Activated B cell treated with CpG ODN at 0.5 μM for 24 hours (primary cell): ENCODE measurements at regions of chr3 and their contacts with region 1.

Region 1: GRCh38 chr3:119524931-119525662 is 26.8 kb downstream of the TIMMDC1 start:
- DNase-seq: no peak
- ATAC-seq: no peak
- H3K4me3 Mint-ChIP-seq: no peak overlapping the region
- H3K27ac Mint-ChIP-seq: peak overlapping the region; percentile 15
- H3K4me1 Mint-ChIP-seq: peaks cover 10% of the 10 kb centered on the region
- H3K27me3 Mint-ChIP-seq: no peaks in the 10 kb centered on the region
- CTCF ChIP-seq: no peak

Region 2: GRCh38 chr3:119508172-119508845 is 16.8 kb before region 1 on chr3:
- CTCF ChIA-PET with region 1: no interaction called
- POLR2A ChIA-PET with region 1: no interaction called
- intact Hi-C with region 1: loop called (anchors 2 kb)
- DNase-seq: no peak
- ATAC-seq: no peak
- H3K4me3 Mint-ChIP-seq: no peak overlapping the region
- H3K27ac Mint-ChIP-seq: peak overlapping the region; percentile 15
- H3K4me1 Mint-ChIP-seq: peaks cover 12% of the 10 kb centered on the region
- H3K27me3 Mint-ChIP-seq: no peaks in the 10 kb centered on the region
- CTCF ChIP-seq: no peak

Region 3: DNA sequence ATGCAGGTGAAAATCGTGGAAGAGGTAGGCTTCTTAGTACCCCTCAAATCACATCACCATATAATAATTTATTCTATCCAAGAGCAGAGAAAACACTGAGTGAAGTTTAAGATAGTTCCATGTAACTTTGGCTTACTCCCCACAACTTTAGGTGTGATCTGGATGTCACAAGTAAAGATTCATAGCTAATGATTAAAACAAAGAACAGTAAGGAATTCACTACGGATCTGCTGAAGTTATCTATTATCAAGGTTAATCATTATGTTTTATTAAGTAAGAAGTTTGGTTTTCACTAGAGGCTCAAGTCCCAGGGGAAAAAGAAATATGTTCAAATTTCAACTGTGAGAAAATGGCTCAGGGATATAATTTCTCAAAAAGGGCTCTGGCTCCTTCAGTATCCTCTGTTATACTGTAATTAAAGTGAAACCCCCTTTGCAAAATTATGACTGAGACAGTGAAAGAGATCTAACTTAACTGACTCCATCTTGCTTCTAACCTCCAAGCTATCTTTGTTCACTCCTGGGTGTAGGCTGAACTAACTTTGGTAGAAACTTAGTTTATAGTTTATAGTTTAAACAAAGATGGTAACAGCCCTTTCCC is 17.2 kb after region 1 on chr3:
- CTCF ChIA-PET with region 1: no interaction called
- POLR2A ChIA-PET with region 1: no interaction called
- intact Hi-C with region 1: loop called (anchors 1 kb)
- DNase-seq: no peak
- ATAC-seq: no peak
- H3K4me3 Mint-ChIP-seq: peak overlapping the region; percentile 33
- H3K27ac Mint-ChIP-seq: peak overlapping the region; percentile 77
- H3K4me1 Mint-ChIP-seq: peaks cover 79% of the 10 kb centered on the region
- H3K27me3 Mint-ChIP-seq: no peaks in the 10 kb centered on the region
- CTCF ChIP-seq: no peak